PC-9 (cell line): ENCODE measurements at regions of chr5 and their contacts with region 1.

Region 1: DNA sequence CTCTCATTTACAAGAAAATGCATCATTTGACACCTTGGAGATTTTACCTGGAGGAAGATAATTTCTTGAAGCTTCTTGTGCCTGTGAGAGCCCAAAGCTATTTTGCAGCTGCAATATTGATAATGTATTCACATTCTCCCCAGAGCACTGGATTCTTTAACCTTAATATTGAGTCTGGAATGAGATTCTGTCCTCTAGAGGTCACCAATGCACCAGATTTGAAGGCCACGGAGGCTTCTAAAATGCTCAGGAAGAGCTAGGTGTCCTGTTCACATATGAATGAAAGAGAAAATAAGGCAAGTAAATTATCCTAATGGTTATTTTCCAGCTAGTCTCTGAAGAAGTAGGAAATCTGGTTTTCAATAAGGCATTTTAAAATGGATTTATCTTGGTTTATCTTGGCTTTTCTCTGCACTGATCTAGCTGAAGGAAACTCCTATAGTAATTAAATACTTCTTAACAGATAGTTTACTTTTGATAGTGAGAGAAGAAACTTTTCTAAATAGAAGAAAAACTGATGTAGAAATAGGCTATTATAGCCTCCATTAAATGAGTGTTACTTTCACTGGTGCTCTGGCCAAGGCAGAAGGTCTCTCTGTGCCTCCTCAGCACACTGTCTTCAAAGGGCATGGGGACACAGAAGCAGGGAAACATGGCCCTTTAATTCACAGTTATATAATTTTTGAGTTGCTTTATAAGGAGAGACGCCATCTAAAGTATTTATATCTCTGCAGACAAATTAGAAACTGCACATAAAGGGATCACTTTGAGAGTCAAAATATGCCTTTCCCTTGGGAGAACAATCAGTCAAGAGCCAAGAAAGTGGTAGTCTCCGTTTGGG is 297.0 kb upstream of the ACTBL2 start:
- DNase-seq: peak; percentile 59 to 73
- H3K4me3 ChIP-seq: no peak overlapping the region
- H3K27ac ChIP-seq: peak overlapping the region; percentile 55
- H3K4me1 ChIP-seq: peaks cover 29% of the 10 kb centered on the region
- H3K27me3 ChIP-seq: no peaks in the 10 kb centered on the region
- CTCF ChIP-seq: peak; percentile 77

Region 2: DNA sequence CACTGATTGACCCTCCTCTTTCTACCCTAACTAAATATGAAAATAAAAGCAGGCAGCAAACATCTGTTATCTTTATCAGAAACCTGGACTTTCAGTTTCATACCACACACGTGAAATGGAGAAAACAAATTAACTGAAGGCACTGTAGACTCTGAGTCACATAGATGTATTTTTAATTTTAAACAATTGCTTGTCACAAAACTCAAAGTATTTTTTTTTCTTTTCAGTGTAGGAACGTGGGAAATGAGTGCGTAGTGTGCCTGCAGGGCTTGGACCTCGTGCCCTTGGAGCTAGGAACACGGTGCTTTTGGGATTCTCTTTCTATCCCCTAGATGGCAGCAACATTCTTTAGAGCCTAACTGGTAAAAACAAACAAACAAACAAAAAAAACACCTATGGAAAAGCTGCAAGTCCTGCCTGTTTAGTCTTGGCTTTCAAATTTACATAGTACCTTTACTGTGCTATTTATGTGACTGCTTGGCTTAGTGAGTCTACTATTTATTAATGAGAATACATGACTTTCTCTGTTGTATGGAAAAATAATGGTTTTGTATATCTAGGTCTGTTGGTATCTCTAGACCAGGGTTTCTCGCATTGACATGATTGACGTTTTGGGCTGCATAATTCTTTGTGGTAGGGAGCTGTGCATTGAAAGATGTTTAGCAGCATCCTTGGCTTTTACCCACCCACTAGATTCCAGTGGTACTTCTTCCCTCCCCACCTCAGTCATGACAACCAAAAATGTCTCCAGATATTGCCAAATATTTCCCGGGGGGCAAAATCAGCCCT is 280.1 kb before region 1 on chr5:
- CTCF ChIA-PET with region 1: interaction called, 14 read pairs
- POLR2A ChIA-PET with region 1: interaction called, 4 read pairs
- intact Hi-C with region 1: loop called (anchors 1 kb)
- DNase-seq: peak; percentile 50 to 84
- H3K4me3 ChIP-seq: peak overlapping the region; percentile 18; the same call in 1 of the 2 replicates
- H3K27ac ChIP-seq: peak overlapping the region; percentile 74
- H3K4me1 ChIP-seq: peaks cover 34% of the 10 kb centered on the region
- H3K27me3 ChIP-seq: no peaks in the 10 kb centered on the region
- CTCF ChIP-seq: peak; percentile 84

Region 3: DNA sequence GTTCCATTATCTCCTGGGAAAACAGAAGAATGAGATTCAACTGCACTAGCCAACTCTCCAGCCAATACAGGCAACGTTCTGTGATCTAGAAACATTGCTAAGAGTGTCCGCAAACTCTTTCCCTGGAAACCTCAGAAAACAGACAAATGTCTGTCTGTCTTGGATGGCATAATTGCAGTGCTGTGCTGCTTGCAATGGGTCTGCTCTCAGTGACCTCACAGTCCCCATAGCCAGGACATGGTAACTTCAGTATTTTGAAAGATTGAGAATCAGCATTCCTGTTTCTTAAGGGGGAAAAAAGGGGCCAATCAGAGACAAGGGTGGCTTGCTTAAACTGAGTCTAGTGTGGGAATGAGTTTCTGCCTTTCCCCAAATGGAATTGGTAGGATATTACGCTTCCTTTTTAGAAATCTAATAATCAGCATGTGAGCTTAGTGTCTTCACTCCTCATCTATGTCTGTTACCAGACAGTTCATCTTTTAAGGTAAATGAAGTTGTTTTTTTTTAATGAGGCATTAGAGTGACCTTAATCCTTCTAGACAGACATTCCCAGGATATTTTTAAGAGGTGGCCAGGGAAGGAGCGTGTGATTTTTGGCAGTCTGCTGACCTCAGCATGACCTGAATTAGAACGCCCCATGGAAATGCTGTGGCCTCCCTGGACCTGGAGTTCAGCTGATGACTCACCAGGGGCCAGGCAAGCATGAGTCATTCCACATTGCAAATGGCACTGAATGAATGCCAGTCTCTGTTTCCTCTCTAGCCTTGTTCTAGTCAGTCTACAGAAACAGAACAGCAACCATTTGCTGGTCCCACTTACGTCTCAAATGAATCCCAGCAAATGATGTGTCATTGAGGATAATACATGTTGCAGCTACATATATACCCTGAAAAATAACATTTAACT is 86.8 kb before region 1 on chr5:
- CTCF ChIA-PET with region 1: interaction called, 5 read pairs
- POLR2A ChIA-PET with region 1: interaction called, 14 read pairs
- intact Hi-C with region 1: loop called (anchors 2 kb)
- DNase-seq: peak; percentile 83 to 86
- H3K4me3 ChIP-seq: no peak overlapping the region; the same call in 1 of the 2 replicates
- H3K27ac ChIP-seq: peak overlapping the region; percentile 91
- H3K4me1 ChIP-seq: peaks cover 25% of the 10 kb centered on the region
- H3K27me3 ChIP-seq: no peaks in the 10 kb centered on the region
- CTCF ChIP-seq: no peak

Region 4: GRCh38 chr5:57816108-57816507 is 36.5 kb after region 1 on chr5:
- CTCF ChIA-PET with region 1: interaction called, 10 read pairs
- POLR2A ChIA-PET with region 1: interaction called, 11 read pairs
- intact Hi-C with region 1: loop called (anchors 2 kb)
- DNase-seq: peak; percentile 51 to 81
- H3K4me3 ChIP-seq: no peak overlapping the region
- H3K27ac ChIP-seq: peak overlapping the region; percentile 73
- H3K4me1 ChIP-seq: peaks cover 22% of the 10 kb centered on the region
- H3K27me3 ChIP-seq: no peaks in the 10 kb centered on the region
- CTCF ChIP-seq: no peak

Region 5: GRCh38 chr5:57834829-57835608 is 55.4 kb after region 1 on chr5:
- CTCF ChIA-PET with region 1: no interaction called
- POLR2A ChIA-PET with region 1: no interaction called
- intact Hi-C with region 1: loop called (anchors 1 kb)
- DNase-seq: no peak
- H3K4me3 ChIP-seq: no peak overlapping the region
- H3K27ac ChIP-seq: no peak overlapping the region
- H3K4me1 ChIP-seq: peaks cover 30% of the 10 kb centered on the region
- H3K27me3 ChIP-seq: no peaks in the 10 kb centered on the region
- CTCF ChIP-seq: no peak

Region 6: GRCh38 chr5:58094031-58094430 is 314.4 kb after region 1 on chr5:
- CTCF ChIA-PET with region 1: no interaction called
- POLR2A ChIA-PET with region 1: no interaction called
- intact Hi-C with region 1: loop called (anchors 1 kb)
- DNase-seq: peak; percentile 72 to 96
- H3K4me3 ChIP-seq: no peak overlapping the region
- H3K27ac ChIP-seq: peak overlapping the region; percentile 92
- H3K4me1 ChIP-seq: peaks cover 25% of the 10 kb centered on the region
- H3K27me3 ChIP-seq: no peaks in the 10 kb centered on the region
- CTCF ChIP-seq: no peak

Region 7: DNA sequence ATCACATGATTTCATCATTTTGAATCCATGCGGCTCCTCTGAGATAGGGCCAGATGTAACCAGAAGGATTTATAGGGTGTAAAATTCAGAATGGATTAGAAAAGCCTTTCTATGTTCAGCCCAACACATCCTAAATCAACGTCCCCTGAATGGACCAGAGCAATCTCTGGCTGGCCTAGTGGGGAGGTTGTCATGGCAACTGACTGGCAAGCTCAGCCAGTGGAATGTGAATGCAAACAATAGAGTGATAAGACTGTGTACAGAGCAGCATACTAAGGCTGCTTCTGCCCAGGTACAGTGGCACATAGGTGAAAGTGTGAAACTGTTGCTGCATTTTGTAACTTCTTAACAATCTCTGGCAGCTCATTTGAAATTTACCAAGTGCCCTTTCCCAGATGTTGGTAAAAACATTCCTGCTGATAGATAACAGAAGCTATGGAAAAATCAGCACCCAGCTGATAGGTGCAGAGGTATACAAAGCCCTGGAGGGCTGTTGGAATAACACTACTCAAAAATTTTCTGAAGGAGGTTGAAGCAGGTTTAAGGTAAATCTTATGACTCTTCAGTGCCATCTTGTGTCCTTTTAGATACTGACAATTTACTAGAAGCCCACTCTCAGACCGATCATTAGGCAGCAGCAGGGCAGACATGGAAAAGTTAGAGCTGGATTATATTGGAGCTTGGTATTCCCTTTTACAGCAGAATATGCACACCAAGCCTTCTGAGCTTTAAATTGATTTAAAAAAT is 1070.5 kb after region 1 on chr5:
- CTCF ChIA-PET with region 1: no interaction called
- POLR2A ChIA-PET with region 1: no interaction called
- intact Hi-C with region 1: loop called (anchors 1 kb)
- DNase-seq: peak; percentile 39 to 82
- H3K4me3 ChIP-seq: no peak overlapping the region
- H3K27ac ChIP-seq: no peak overlapping the region
- H3K4me1 ChIP-seq: peaks cover 12% of the 10 kb centered on the region
- H3K27me3 ChIP-seq: no peaks in the 10 kb centered on the region
- CTCF ChIP-seq: peak; percentile 75